ENCODE measurements at regions of chr9 and their contacts with region 1.

Region 1: GRCh38 chr9:13427587-13427986 is 148.1 kb upstream of the MPDZ start:
- DNase-seq: peak; percentile 56
- ATAC-seq: no peak
- H3K4me3 ChIP-seq: no peak overlapping the region
- H3K27ac ChIP-seq: no peak overlapping the region
- H3K4me1 ChIP-seq: no peaks in the 10 kb centered on the region
- H3K27me3 ChIP-seq: no peaks in the 10 kb centered on the region
- CTCF ChIP-seq: peak; percentile 78

Region 2: DNA sequence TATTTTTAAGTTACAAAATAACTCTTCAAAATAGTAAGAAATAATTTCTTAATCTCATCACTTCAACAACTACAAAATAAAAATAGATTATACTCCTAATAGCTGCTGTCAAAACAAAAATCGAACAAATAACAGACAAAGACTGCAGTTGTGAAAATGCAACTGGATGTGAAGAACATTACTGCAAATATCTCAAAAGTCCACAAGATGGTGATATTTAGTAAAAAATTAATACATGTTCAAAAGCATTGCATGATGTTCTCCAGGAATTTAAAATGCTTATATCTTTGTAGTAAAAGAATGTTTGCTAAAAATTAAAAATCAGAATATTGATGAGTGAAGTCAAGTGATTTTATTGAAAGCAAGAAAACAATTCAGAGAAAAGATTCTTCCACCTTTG is 214.2 kb before region 1 on chr9:
- CTCF ChIA-PET with region 1: no interaction called
- POLR2A ChIA-PET with region 1: no interaction called
- intact Hi-C with region 1: loop called (anchors 10 kb)
- DNase-seq: peak; percentile 30
- ATAC-seq: no peak
- H3K4me3 ChIP-seq: no peak overlapping the region
- H3K27ac ChIP-seq: no peak overlapping the region
- H3K4me1 ChIP-seq: no peaks in the 10 kb centered on the region
- H3K27me3 ChIP-seq: no peaks in the 10 kb centered on the region
- CTCF ChIP-seq: peak; percentile 62

Region 3: DNA sequence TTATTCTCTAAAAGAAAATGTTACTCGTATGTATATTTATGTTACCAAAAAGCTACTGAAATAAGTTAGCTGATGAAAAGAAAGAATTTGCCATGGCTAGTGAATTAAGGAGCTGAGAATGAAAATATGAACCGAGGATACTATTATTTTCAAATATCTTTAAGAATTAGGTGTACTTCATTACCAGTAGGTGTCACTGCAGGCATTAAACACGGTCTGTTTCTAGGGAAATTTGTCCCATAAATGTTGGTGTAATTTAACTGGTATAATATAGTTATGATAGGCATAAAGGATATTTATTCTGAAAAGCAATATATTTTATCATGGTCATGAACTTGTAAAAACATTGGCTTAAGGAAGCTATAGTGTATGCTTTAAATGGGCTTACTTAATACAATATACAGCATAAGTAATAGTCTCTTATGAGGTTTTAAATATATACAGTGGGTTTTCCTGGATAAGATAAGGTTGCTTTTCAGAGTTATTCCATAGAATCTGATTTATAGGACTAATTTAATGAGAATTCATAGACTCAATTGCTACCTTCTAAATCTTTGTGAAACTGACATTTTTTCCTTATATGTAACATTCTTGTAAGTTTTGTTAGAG is 75.7 kb before region 1 on chr9:
- CTCF ChIA-PET with region 1: no interaction called
- POLR2A ChIA-PET with region 1: no interaction called
- intact Hi-C with region 1: loop called (anchors 5 kb)
- DNase-seq: peak; percentile 59
- ATAC-seq: peak; percentile 70
- H3K4me3 ChIP-seq: no peak overlapping the region
- H3K27ac ChIP-seq: no peak overlapping the region
- H3K4me1 ChIP-seq: peaks cover 6% of the 10 kb centered on the region; the same call in 1 of the 2 replicates
- H3K27me3 ChIP-seq: no peaks in the 10 kb centered on the region
- CTCF ChIP-seq: peak; percentile 76

Region 4: DNA sequence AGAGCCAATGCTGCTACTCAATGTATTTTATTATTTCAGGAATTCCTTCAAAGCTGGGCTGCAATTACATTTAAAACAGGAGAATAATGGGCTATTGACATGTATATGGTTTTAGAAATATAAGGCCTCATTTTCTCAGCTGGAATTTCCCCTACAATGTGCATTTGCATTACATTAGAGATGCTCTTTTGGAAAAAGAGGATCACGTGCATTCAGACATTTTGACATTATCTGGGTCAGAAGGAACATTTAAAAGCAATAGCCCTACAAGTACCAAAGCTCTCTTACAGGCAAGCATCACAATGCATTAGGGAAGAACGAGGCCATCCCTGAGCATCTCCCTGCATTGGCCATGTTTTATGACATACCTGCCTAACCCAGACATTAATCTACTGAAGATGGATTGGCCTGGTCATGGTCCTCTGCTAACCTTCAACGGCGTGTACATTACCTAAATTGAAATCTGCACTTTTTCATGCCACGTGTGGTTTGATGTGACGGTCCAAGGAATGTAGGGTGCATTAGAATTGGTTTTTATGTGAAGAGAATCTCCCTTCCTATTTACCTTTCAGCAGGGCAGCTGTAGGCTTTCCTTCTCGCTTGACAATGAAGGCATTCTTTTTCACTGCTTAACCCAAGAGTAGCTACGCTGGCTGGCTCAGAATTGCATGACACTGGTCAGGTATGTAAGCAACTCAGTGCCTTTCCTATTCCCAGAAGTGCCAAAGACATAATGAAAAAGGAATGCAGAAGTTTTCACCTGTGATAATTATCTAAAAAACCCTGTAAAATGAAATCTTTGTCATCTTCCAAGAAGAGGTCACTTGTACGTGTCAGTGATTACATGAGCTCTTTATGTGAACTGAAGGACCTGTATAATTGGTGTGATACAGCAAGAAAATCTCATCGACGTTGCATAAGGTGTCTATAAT is 64.2 kb after region 1 on chr9:
- CTCF ChIA-PET with region 1: no interaction called
- POLR2A ChIA-PET with region 1: no interaction called
- intact Hi-C with region 1: no loop called
- DNase-seq: no peak
- ATAC-seq: no peak
- H3K4me3 ChIP-seq: no peak overlapping the region
- H3K27ac ChIP-seq: no peak overlapping the region
- H3K4me1 ChIP-seq: no peaks in the 10 kb centered on the region
- H3K27me3 ChIP-seq: no peaks in the 10 kb centered on the region
- CTCF ChIP-seq: no peak

Region 5: DNA sequence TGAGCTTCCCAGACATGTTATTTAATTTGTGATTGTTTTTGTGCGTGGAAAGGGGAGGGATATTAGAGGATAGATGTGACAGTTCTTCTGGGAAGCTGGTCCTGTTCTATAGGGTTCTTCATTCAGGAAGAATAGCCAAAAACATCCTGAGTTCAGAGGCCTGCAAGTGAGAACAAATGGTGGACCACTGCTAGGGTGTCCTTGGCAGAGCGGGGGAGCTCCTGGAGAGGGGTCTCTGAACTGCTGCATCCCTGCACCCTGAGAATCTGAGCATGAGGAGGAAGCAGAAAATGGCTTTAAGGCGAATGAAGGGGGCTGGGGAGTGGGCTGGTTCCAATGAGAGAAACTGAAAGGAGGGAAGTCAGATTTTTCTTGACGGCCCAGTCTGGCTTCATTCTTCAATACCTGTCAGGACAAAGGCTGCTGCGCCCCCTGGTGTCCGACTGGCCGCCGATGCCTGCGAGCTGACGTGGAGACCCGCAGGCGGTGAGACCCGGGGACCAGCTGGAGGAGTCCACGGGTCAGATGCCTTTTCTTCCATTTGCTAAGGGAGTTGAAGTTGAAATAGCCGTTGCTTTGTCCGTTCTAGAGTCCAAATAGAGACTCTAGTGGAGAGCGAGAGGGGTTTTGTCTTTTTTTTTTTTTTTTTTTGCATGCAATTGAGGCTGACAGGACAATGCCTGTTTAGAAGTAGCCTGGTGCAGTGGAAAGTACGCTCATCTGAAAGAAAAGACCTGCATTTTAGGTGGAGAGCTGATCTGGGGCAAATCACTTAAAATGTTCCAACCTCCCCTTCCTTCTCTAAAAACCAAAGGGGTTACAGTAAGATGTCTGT is 925.9 kb after region 1 on chr9:
- CTCF ChIA-PET with region 1: interaction called, 3 read pairs
- POLR2A ChIA-PET with region 1: no interaction called
- intact Hi-C with region 1: loop called (anchors 1 kb)
- DNase-seq: peak; percentile 82
- ATAC-seq: peak; percentile 89
- H3K4me3 ChIP-seq: peak overlapping the region; percentile 55
- H3K27ac ChIP-seq: no peak overlapping the region
- H3K4me1 ChIP-seq: 0 out of 2 replicates have a peak, but pooled peaks cover 3% of the 10 kb centered on the region
- H3K27me3 ChIP-seq: no peaks in the 10 kb centered on the region
- CTCF ChIP-seq: peak; percentile 87

Region 6: GRCh38 chr9:14400658-14400995 is 973.0 kb after region 1 on chr9:
- CTCF ChIA-PET with region 1: interaction called, 5 read pairs
- POLR2A ChIA-PET with region 1: no interaction called
- intact Hi-C with region 1: loop called (anchors 2 kb)
- DNase-seq: peak; percentile 78
- ATAC-seq: peak; percentile 91
- H3K4me3 ChIP-seq: peak overlapping the region; percentile 58
- H3K27ac ChIP-seq: peak overlapping the region; percentile 23; the same call in 1 of the 2 replicates
- H3K4me1 ChIP-seq: peaks cover 20% of the 10 kb centered on the region
- H3K27me3 ChIP-seq: no peaks in the 10 kb centered on the region
- CTCF ChIP-seq: peak; percentile 70

Region 7: GRCh38 chr9:14428781-14429230 is 1001.2 kb after region 1 on chr9:
- CTCF ChIA-PET with region 1: interaction called, 4 read pairs
- POLR2A ChIA-PET with region 1: no interaction called
- intact Hi-C with region 1: loop called (anchors 2 kb)
- DNase-seq: peak; percentile 73
- ATAC-seq: peak; percentile 63
- H3K4me3 ChIP-seq: no peak overlapping the region
- H3K27ac ChIP-seq: no peak overlapping the region
- H3K4me1 ChIP-seq: peaks cover 19% of the 10 kb centered on the region
- H3K27me3 ChIP-seq: no peaks in the 10 kb centered on the region
- CTCF ChIP-seq: peak; percentile 77

Measured in PC-3 (cell line).